ENCODE measurements at regions of chr19 and their contacts with region 1.

Region 1: GRCh38 chr19:33778089-33778791 is 18.4 kb upstream of the KCTD15 start:
- DNase-seq: peak; percentile 89
- ATAC-seq: peak; percentile 98
- H3K4me3 Mint-ChIP-seq: no peak overlapping the region
- H3K27ac Mint-ChIP-seq: no peak overlapping the region
- H3K4me1 Mint-ChIP-seq: peaks cover 3% of the 10 kb centered on the region
- H3K27me3 Mint-ChIP-seq: peaks cover 29% of the 10 kb centered on the region
- CTCF ChIP-seq: peak; percentile 98

Region 2: DNA sequence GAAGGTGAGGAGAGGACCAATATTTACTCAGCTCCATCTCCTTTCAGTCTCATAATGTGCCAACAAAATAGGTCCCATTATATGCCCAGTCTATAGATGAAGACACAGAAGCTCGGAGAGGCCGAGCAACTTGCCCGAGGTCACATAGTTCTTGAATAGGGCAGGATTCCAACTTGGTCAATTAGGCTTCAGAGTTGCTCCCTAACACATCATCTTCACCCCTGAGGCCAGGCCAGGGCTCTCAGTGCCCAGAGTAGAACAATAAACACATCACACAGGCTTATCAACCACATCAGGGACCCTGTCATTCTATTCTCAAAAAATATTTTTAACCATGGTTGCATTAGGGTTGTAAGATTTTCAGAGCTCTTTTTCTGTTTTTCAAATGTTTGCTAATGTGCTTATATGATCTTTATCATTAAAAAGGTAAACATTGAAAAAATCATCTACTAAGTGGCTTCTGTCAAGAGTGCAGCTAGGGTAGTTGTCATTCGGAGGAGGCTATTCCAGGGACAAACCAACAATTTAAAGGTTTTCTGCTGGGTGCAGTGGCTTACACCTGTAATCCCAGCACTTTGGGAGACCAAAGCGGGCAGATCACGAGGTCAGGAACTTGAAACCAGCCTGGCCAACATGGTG is 236.3 kb before region 1 on chr19:
- CTCF ChIA-PET with region 1: no interaction called
- POLR2A ChIA-PET with region 1: no interaction called
- intact Hi-C with region 1: no loop called
- DNase-seq: no peak
- ATAC-seq: no peak
- H3K4me3 Mint-ChIP-seq: no peak overlapping the region
- H3K27ac Mint-ChIP-seq: no peak overlapping the region
- H3K4me1 Mint-ChIP-seq: no peaks in the 10 kb centered on the region
- H3K27me3 Mint-ChIP-seq: peaks cover 14% of the 10 kb centered on the region
- CTCF ChIP-seq: no peak

Region 3: DNA sequence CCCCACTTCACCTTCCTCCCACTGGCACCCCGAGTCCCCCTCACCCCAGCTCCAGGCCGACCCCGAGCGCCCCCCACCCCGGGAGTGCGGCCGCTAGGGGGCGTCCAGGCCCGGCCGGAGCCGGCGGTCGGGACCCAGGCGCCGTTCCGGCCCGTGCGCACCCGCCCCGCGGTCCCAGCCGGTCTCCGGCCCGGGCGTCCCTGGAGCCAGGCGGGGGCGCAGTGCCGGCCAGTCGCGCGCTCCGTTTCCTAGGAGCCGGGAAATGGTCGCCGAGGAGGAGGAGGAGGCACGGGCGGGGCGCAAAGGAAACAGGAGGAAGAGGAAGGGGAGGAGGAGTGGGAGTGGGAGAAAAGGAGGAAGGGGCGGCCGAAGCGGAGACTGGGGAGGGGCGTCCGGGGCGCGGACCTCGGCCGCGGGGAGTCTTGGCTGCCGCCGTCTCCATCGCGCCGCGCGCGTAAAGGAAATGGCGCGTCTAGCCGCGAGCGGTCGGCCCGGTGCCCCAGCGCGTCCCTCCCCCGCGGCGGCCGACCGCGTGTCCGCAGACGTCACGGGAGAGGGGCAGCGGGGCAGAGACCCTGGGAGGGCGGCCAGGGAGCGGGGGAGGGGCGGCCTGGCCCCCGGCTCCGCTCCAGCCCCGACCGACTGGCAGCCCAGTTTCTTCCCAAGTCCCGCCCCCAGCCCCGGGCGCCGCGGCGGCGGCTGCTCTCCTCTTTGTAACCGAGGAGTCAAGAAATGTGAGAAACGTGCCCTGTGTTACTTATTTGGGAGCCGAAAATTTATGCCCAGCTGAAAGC is 17.3 kb after region 1 on chr19:
- CTCF ChIA-PET with region 1: interaction called, 12 read pairs
- POLR2A ChIA-PET with region 1: no interaction called
- intact Hi-C with region 1: no loop called
- DNase-seq: peak; percentile 64
- ATAC-seq: peak; percentile 64
- H3K4me3 Mint-ChIP-seq: peak overlapping the region; percentile 75
- H3K27ac Mint-ChIP-seq: peak overlapping the region; percentile 46
- H3K4me1 Mint-ChIP-seq: peaks cover 5% of the 10 kb centered on the region
- H3K27me3 Mint-ChIP-seq: peaks cover 19% of the 10 kb centered on the region
- CTCF ChIP-seq: no peak

Region 4: DNA sequence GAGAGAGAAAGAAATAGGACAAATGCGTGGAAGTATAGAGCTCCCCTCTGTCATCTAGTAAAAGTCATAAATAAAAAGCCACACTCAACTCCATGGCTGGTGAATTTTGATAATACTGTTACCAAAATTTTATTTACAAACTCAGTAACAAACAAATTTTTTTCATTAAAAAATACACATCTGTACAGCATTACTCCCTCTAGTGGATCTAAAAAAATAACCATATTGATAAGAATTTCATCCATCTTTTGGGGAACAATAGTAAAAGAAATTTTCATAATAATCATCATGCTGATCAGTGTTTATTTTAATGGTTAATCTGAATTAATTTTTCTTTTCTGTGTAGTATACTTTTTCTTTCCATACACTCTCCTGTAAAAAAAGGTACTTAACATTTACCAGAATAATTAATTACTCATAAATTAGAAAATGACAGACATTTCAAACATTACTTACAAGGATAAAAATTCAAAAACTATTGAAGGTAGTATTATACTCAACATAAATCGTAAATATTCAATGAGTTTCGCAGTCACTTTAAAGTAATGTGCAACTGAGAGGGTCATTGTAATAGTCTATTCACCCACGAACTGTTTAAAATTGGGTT is 220.6 kb after region 1 on chr19:
- CTCF ChIA-PET with region 1: interaction called, 14 read pairs
- POLR2A ChIA-PET with region 1: no interaction called
- intact Hi-C with region 1: loop called (anchors 1 kb)
- DNase-seq: no peak
- ATAC-seq: no peak
- H3K4me3 Mint-ChIP-seq: no peak overlapping the region
- H3K27ac Mint-ChIP-seq: no peak overlapping the region
- H3K4me1 Mint-ChIP-seq: no peaks in the 10 kb centered on the region
- H3K27me3 Mint-ChIP-seq: peaks cover 14% of the 10 kb centered on the region
- CTCF ChIP-seq: no peak

Region 5: DNA sequence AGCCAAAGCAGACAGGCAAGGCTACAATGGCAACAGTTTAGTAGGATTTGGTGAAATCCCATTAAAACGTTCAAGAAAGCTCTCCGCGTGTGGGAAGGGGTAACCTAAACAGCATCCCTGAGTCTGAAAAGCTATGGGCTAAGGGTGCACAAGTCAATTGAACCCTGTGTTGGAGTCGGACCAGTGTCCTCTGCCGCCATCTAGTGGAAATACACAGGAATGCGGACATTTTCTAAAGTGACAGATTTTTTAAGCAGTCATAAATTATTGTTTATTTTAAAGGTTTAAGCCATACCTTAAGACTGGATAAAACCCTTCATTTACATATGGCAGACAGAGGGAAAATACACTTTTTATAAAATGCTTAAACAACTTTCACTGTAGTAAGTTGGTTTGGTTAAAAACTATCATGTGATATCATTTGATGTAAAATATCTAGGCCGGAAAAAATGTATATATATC is 367.5 kb after region 1 on chr19:
- CTCF ChIA-PET with region 1: interaction called, 14 read pairs
- POLR2A ChIA-PET with region 1: no interaction called
- intact Hi-C with region 1: loop called (anchors 1 kb)
- DNase-seq: no peak
- ATAC-seq: peak; percentile 65
- H3K4me3 Mint-ChIP-seq: no peak overlapping the region
- H3K27ac Mint-ChIP-seq: no peak overlapping the region
- H3K4me1 Mint-ChIP-seq: peaks cover 1% of the 10 kb centered on the region
- H3K27me3 Mint-ChIP-seq: peaks cover 3% of the 10 kb centered on the region
- CTCF ChIP-seq: peak; percentile 82

Region 6: DNA sequence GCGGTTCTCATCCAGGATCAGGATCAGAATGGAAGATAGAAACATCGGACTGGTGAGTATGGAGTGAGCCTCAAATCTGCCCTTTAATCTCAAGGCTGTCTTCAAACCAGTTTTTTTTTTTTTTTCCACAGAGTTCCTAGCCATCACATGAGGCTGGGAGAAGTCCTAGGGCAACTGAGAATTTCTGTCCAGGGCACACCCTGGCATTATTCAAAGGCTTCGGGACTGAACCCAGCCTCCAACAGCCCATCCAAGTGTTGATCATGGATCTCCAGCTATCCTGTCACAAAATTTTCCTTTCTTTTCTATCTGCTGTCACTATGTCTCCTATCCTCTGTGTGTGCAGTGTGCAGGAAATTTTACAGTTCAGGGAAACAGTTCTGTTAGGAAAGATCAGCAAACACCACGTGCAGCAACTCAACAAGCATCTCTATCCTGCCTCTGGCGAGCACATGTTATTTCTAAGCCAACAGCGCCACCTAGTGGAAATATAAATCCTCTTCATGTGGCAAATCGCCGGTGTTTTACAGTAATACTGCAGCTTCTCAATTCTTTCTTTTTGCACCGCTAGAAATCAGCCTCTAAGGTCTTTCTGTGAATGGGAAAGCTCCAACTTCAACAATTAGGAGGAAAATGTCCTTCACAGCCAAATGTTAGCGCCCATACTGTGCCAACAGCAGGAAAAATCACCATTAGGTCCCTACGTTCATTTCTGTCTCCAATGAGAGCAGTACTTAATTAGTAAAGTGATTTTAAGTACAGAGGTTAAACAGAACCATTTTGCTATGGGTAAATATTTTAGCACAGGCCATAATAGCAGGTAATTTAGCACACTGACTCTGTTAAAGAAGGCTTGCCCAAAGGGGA is 934.4 kb after region 1 on chr19:
- CTCF ChIA-PET with region 1: interaction called, 4 read pairs
- POLR2A ChIA-PET with region 1: no interaction called
- intact Hi-C with region 1: loop called (anchors 2 kb)
- DNase-seq: no peak
- ATAC-seq: peak; percentile 49
- H3K4me3 Mint-ChIP-seq: no peak overlapping the region
- H3K27ac Mint-ChIP-seq: no peak overlapping the region
- H3K4me1 Mint-ChIP-seq: no peaks in the 10 kb centered on the region
- H3K27me3 Mint-ChIP-seq: peaks cover 18% of the 10 kb centered on the region
- CTCF ChIP-seq: peak; percentile 61